ACHN (cell line): ENCODE measurements at regions of chr17 and their contacts with region 1.

Region 1: GRCh38 chr17:1882836-1883235 is 53.0 kb downstream of the RPA1 start:
- DNase-seq: peak; percentile 55

Region 2: DNA sequence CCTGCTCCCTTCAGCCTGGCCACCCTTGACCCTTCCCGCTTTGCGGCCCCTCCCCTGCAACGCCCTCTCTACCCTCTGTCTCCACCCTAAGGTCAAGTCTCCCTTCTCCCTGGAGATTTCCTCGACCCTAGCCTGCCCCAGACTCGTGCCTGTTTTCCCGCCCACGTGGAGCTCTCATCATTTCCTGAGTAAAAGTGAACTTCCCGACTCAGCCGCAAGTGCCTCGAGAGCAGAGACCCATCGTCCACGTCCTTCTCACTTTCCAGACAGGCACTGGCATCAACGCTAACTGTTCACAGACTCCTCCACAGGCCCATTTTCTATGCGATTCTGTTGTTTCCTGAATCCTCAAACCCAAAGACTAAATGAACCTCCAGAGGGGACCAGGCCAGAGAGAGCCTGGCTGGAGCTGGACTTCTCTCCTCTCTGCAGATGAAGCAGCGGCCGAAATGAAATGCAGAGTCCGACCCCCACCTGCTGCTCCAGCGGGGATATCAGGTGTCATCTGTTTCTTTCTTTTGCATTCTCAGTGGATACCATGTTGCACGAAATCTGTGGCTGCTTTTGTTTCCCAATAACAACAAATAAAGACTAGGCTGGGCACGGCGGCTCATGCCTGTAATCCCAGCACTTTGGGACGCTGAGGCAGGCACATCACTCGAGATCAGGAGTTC is 89.8 kb after region 1 on chr17:
- in situ Hi-C with region 1: no loop called
- DNase-seq: no peak

Region 3: GRCh38 chr17:2041561-2042366 is 158.9 kb after region 1 on chr17 and contains the start of gene OVCA2:
- in situ Hi-C with region 1: loop called (anchors 25 kb)
- DNase-seq: peak; percentile 97